ENCODE measurements at regions of chr9 and their contacts with region 1.

Region 1: DNA sequence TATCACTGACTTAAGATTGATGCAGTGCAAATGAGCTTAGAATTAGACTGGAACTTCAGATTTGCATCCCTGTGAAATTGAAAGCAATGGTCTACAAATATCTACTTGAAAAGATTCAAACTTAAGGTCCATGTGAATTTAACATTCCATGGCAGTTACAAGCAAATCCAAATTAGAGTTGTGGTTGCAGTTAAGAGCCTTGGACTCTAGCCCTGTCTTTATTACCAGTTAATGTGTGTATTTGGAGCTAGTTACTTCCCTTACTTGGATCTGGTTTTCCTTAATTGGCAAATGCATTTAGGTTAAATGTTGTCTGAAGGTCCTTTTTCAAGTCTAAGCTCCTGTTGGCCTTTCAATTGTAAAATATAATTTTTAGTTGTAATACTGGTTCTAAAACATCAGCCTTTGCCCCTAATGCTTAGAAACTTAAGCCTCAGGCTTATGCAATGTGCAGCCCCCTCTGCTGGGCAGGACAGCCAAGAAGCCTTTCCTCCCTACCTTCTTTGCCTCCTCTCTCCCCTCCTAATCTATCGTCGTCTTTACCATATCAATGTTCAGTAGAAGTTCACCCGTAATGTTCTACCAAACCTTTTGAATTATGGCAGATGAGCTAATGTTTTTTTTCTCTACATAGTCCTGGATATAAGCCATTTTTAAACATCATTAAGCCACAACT is 59.5 kb downstream of the ERMP1 start:
- DNase-seq: no peak
- ATAC-seq: no peak
- H3K4me3 ChIP-seq: no peak overlapping the region
- H3K27ac ChIP-seq: no peak overlapping the region
- H3K4me1 ChIP-seq: peaks cover 5% of the 10 kb centered on the region; the same call in 1 of the 2 replicates
- H3K27me3 ChIP-seq: no peaks in the 10 kb centered on the region
- CTCF ChIP-seq: peak; percentile 13 to 18 (median 17); a peak in 3 of 6 replicates
- EP300 ChIP-seq: no peak
- POLR2A ChIP-seq: no peak
- RAD21 ChIP-seq: peak; percentile 19; the same call in 1 of the 2 replicates

Region 2: GRCh38 chr9:5721279-5722087 is 52.0 kb before region 1 on chr9:
- CTCF ChIA-PET with region 1: no interaction called
- POLR2A ChIA-PET with region 1: no interaction called
- RAD21 ChIA-PET with region 1: no interaction called
- SMC1A ChIA-PET with region 1: no interaction called
- in situ Hi-C with region 1: no loop called
- intact Hi-C with region 1: no loop called
- DNase-seq: no peak
- ATAC-seq: no peak
- H3K4me3 ChIP-seq: no peak overlapping the region
- H3K27ac ChIP-seq: no peak overlapping the region
- H3K4me1 ChIP-seq: no peaks in the 10 kb centered on the region
- H3K27me3 ChIP-seq: no peaks in the 10 kb centered on the region
- CTCF ChIP-seq: no peak
- EP300 ChIP-seq: no peak
- POLR2A ChIP-seq: no peak
- RAD21 ChIP-seq: no peak

Region 3: DNA sequence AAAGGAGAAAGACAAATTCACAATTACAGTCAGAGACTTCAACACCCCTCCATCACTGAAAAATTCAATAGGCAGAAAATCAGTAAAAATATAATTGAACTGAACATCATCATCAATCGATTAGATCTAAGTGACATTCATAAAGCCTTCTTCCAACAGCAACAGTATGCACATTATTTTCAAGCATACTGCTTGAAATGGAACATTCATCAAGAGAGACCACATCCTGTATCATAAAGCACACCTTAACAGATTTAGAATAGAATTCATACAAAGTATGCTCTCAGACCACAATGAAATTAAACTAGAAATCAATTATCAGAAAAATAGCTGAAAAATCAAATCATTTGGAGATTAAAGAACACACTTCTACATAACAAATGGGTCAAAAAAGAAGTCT is 20.4 kb after region 1 on chr9:
- CTCF ChIA-PET with region 1: interaction called, 3 read pairs
- POLR2A ChIA-PET with region 1: no interaction called
- RAD21 ChIA-PET with region 1: no interaction called
- SMC1A ChIA-PET with region 1: interaction called, 10 read pairs
- in situ Hi-C with region 1: no loop called
- intact Hi-C with region 1: no loop called
- DNase-seq: no peak
- ATAC-seq: no peak
- H3K4me3 ChIP-seq: no peak overlapping the region
- H3K27ac ChIP-seq: no peak overlapping the region
- H3K4me1 ChIP-seq: no peaks in the 10 kb centered on the region
- H3K27me3 ChIP-seq: no peaks in the 10 kb centered on the region
- CTCF ChIP-seq: no peak
- EP300 ChIP-seq: no peak
- POLR2A ChIP-seq: no peak
- RAD21 ChIP-seq: no peak